Endothelial cell of umbilical vein (primary cell): ENCODE measurements at regions of chr4 and their contacts with region 1.

Region 1: DNA sequence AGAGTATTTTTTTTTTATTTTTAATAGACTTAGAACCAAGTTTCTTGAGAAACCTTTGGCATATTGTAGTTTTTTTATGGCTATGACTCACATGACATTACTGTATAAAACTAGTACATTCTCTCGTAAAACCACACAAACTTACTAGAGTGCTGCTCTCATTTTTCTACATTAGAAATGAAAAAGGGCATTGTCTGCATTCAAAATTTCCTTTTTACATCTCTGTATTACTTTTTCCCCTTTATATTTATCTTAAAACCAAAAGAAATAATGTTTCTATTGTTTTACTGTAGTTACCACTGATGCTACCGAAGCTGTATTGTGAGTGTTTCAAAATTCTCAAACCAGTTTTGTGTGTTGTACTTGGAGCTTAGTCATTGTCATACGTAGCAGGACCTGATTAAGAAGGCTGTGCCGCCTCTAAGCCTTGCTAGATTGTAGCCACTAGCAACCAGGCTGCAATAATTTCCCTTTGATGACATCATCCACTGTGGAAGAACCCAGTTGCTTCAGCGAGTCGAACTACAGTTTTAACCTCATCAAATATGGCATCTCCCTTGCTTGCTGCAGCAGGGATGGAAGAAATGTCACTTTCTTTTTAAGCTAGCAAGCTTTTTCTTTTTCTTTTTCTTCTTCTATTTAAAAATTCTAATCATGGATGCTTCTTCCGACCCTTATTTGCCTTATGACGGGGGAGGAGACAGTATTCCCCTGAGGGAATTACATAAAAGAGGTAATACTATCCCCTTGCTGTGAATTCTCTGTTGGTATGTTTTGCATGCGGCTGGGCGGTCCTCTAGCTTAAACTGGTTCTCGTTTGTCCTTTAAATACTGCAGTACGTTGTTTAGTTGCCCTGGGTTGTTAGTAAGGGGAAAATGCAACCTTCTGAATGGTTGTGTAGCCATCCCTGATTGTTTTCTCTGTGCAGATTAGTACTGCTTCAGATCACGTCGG is 39.6 kb downstream of the CLCN3 start:
- DNase-seq: peak; percentile 97
- H3K4me3 ChIP-seq: peak overlapping the region; percentile 37 to 77 (median 45)
- H3K27ac ChIP-seq: peak overlapping the region; percentile 94
- H3K4me1 ChIP-seq: peaks cover 52% of the 10 kb centered on the region
- H3K27me3 ChIP-seq: no peaks in the 10 kb centered on the region
- CTCF ChIP-seq: no peak
- POLR2A ChIP-seq: peak; percentile 28

Region 2: DNA sequence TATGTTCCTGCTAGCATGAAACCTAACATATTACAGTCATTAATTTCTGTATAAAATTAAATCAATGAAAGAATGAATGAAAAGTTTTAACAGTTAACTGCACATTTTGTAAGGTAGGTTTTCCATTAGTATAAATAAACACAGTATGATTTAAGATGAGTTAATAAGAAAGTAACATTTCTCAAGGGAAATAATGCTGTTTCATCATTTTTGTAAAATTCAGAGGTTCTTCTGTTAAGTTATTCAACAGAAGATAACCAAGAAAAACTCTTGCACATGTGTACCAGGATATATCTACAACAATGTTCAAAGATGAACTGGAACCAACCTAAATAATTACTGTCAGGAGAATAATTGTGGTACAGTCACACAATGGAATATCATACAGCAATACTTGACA is 136.2 kb before region 1 on chr4:
- CTCF ChIA-PET with region 1: no interaction called
- POLR2A ChIA-PET with region 1: no interaction called
- dilution Hi-C with region 1: no loop called
- intact Hi-C with region 1: no loop called
- DNase-seq: no peak
- H3K4me3 ChIP-seq: no peak overlapping the region
- H3K27ac ChIP-seq: no peak overlapping the region
- H3K4me1 ChIP-seq: no peaks in the 10 kb centered on the region
- H3K27me3 ChIP-seq: no peaks in the 10 kb centered on the region
- CTCF ChIP-seq: no peak
- POLR2A ChIP-seq: no peak

Region 3: DNA sequence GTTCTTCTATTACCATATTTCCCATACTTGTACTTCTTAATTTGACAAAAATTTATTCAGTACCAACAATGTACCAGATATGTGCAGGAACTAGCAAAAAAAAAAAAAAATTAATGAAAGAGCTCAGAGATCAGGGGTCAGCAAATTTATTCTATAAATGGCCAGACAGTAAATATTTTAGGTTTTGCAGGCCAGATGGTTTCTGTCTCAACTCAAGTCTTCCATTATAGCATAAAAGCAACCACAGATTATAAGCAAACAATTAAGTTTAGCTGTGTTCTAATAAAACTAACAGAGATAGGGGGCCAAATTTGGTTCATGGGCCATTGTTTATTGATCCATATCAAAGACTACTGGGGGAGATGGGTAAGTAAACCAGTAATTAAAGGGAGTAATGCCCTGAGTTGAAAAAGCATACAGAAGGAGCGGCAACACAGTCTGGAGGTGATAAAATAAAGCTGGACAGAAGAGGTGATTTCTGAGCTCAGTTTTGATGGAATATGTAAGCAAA is 66.9 kb before region 1 on chr4:
- CTCF ChIA-PET with region 1: no interaction called
- POLR2A ChIA-PET with region 1: no interaction called
- dilution Hi-C with region 1: no loop called
- intact Hi-C with region 1: no loop called
- DNase-seq: no peak
- H3K4me3 ChIP-seq: no peak overlapping the region
- H3K27ac ChIP-seq: no peak overlapping the region
- H3K4me1 ChIP-seq: no peaks in the 10 kb centered on the region
- H3K27me3 ChIP-seq: no peaks in the 10 kb centered on the region
- CTCF ChIP-seq: no peak
- POLR2A ChIP-seq: no peak

Region 4: GRCh38 chr4:169619959-169620879 is 39.8 kb before region 1 on chr4 and contains the start of gene CLCN3:
- CTCF ChIA-PET with region 1: interaction called, 19 read pairs
- POLR2A ChIA-PET with region 1: interaction called, 8 read pairs
- dilution Hi-C with region 1: no loop called
- intact Hi-C with region 1: loop called (anchors 1 kb)
- DNase-seq: peak; percentile 98
- H3K4me3 ChIP-seq: peak within 1 kb of the TSS; percentile 81 to 98 (median 91)
- H3K27ac ChIP-seq: peak within 1 kb of the TSS; percentile 92
- H3K4me1 ChIP-seq: peaks cover 19% of the 10 kb centered on the region
- H3K27me3 ChIP-seq: no peaks in the 10 kb centered on the region
- CTCF ChIP-seq: peak in 1 of 2 donors; percentile 14
- POLR2A ChIP-seq: peak; percentile 94
- total RNA-seq, gene CLCN3: 49.0 and 51.4 TPM in 2 replicates

Region 5: DNA sequence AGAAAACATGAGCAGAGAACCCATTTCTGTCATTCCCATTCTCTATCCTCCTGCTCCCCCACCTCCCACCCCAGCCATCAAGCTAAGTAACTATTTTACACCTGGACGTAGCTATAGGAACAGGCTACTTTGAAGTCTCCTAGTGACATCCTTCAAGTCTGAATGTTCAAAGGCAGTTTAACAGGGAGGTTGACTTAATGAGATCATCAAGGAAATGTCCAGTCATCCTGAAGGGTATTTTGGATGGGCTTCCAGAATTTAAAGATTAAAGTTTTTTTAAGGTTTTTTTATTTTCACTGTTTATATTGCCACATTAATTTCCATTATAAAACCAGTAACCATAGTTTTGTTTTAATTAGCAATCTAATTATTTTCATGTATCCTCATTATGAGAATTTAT is 56.7 kb after region 1 on chr4:
- CTCF ChIA-PET with region 1: interaction called, 3 read pairs
- POLR2A ChIA-PET with region 1: no interaction called
- dilution Hi-C with region 1: no loop called
- intact Hi-C with region 1: loop called (anchors 5 kb)
- DNase-seq: peak; percentile 41
- H3K4me3 ChIP-seq: no peak overlapping the region
- H3K27ac ChIP-seq: peak overlapping the region; percentile 11
- H3K4me1 ChIP-seq: peaks cover 10% of the 10 kb centered on the region
- H3K27me3 ChIP-seq: no peaks in the 10 kb centered on the region
- CTCF ChIP-seq: no peak
- POLR2A ChIP-seq: no peak

Region 6: DNA sequence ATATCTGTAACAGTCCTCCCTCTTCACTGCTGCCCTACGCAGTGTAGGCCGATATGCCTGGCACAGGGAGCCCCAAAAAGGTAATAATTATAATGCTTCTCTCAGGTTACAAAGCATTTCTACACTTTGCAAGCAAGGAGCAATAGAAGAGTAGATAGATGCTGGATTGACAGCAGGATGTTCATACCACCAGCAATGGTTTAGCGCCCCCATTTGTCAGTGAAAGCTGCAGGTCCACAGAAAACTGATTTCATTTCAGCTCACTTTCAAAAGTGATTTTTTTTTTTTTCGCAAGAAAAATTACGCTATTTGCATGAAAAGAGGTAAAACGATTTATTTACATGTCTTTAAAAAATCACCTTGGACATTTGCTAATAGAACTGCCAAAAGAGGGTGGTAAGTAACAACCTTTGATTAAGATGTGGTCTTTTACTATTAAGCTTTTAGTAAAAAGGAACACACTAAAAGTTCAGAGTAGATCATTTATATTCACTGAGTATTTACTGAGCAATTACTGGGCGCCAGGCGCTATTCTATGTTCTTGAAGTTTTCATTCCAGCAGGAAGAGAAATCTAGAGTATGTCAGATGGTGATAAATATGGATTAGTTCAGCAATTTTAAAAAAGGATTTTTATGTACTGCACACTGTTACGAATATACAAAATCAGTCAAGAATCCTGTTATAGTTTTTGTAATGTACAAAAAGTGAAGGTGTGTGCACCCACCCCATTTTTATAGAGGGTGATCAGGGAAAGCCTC is 63.4 kb after region 1 on chr4:
- CTCF ChIA-PET with region 1: interaction called, 11 read pairs
- POLR2A ChIA-PET with region 1: no interaction called
- dilution Hi-C with region 1: no loop called
- intact Hi-C with region 1: loop called (anchors 5 kb)
- DNase-seq: peak; percentile 31
- H3K4me3 ChIP-seq: no peak overlapping the region
- H3K27ac ChIP-seq: no peak overlapping the region
- H3K4me1 ChIP-seq: no peaks in the 10 kb centered on the region
- H3K27me3 ChIP-seq: no peaks in the 10 kb centered on the region
- CTCF ChIP-seq: peak in 1 of 2 donors; percentile 13
- POLR2A ChIP-seq: no peak

Region 7: GRCh38 chr4:169757575-169758184 is 97.7 kb after region 1 on chr4 and contains the start of gene HPF1:
- CTCF ChIA-PET with region 1: no interaction called
- POLR2A ChIA-PET with region 1: interaction called, 3 read pairs
- dilution Hi-C with region 1: no loop called
- intact Hi-C with region 1: loop called (anchors 2 kb)
- DNase-seq: peak; percentile 87
- H3K4me3 ChIP-seq: peak within 1 kb of the TSS; percentile 83 to 97 (median 95)
- H3K27ac ChIP-seq: peak within 1 kb of the TSS; percentile 19
- H3K4me1 ChIP-seq: peaks cover 10% of the 10 kb centered on the region
- H3K27me3 ChIP-seq: peaks cover 4 to 8% of the 10 kb centered on the region in 2 experiments
- CTCF ChIP-seq: no peak
- POLR2A ChIP-seq: peak; percentile 79
- total RNA-seq, gene HPF1: 30.1 and 30.3 TPM in 2 replicates

Region 8: DNA sequence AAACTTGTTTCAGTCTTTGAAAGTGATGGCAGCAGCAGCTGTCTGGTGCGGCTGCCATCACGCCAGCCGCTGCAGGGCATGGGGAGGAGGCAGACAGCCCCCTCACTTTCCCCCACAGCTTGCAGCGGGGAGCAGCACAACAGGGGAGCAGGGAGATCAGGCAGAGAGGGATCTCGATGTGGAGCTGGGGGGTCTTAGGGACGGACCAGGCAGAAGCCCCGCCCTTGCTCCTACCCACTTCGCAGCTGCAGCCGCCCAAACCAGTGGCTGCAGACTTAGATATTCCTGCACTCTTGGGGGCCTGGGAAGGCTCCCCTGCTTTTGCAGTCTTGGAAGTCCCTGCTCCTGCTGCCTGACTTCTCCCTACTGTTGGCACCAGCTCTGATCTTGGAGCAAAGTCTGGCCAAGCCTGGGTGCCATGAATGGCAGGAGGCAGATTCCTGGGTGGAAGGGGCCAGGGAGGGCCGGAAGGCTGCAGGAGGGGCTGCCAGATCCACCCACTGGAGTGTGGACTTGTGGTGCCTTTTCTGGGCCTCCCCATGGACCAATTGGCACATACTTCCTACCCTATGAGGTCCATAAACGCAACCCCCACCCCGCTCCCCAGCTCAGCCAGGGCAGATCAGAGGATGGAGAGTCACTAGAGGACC is 380.2 kb after region 1 on chr4:
- CTCF ChIA-PET with region 1: no interaction called
- POLR2A ChIA-PET with region 1: no interaction called
- dilution Hi-C with region 1: no loop called
- intact Hi-C with region 1: no loop called
- DNase-seq: no peak
- H3K4me3 ChIP-seq: no peak overlapping the region
- H3K27ac ChIP-seq: no peak overlapping the region
- H3K4me1 ChIP-seq: no peaks in the 10 kb centered on the region
- H3K27me3 ChIP-seq: peaks cover 0 to 2% of the 10 kb centered on the region in 2 experiments
- CTCF ChIP-seq: no peak
- POLR2A ChIP-seq: no peak